ENCODE measurements at regions of chr18 and their contacts with region 1.

Region 1: DNA sequence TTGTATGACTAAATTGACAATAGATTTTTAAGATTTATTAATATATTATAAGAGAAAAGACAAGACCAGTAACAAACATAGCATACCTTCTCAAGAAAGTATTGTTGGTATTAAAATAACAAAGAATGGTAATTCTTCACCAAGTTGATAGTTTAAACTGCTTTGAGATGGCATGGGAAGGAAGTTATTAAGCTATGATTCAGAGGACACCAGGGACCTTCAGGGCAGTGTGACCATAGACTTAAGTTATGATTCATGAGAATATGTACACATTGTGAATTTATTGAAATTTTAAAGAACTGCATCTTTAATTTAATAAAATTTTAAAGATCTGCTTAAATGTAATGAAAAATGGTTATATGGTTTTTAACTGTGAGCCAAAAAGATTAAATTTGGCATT is 205.7 kb downstream of the DSEL start:
- DNase-seq: peak; percentile 46
- H3K4me3 Mint-ChIP-seq: no peak overlapping the region
- H3K27ac Mint-ChIP-seq: no peak overlapping the region
- H3K4me1 Mint-ChIP-seq: no peaks in the 10 kb centered on the region
- H3K27me3 Mint-ChIP-seq: no peaks in the 10 kb centered on the region
- CTCF ChIP-seq: no peak

Region 2: GRCh38 chr18:67243799-67244587 is 66.8 kb before region 1 on chr18:
- CTCF ChIA-PET with region 1: no interaction called
- POLR2A ChIA-PET with region 1: no interaction called
- intact Hi-C with region 1: no loop called
- DNase-seq: peak; percentile 21
- H3K4me3 Mint-ChIP-seq: peak overlapping the region; percentile 62
- H3K27ac Mint-ChIP-seq: peak overlapping the region; percentile 21
- H3K4me1 Mint-ChIP-seq: peaks cover 12% of the 10 kb centered on the region
- H3K27me3 Mint-ChIP-seq: no peaks in the 10 kb centered on the region
- CTCF ChIP-seq: no peak

Region 3: DNA sequence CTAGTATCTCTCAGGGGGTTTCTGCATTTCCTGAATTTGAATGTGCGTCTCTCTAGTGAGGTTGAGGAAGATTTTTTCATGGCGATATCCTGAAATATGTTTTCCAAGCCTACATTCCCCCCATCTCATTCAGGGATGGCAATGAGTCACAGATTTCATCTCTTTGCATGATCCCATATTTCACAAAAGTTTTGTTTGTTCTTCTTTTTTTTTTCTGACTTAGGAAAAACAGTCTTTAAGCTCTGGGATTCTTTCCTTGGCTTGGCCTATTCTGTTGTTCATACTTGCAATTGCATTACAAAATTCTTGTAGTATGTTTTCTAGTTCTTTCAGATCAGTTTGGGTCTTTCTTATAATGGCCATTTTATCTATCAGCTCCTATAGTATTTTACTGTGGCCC is 69.2 kb after region 1 on chr18:
- CTCF ChIA-PET with region 1: no interaction called
- POLR2A ChIA-PET with region 1: no interaction called
- intact Hi-C with region 1: loop called (anchors 10 kb)
- DNase-seq: no peak
- H3K4me3 Mint-ChIP-seq: no peak overlapping the region
- H3K27ac Mint-ChIP-seq: no peak overlapping the region
- H3K4me1 Mint-ChIP-seq: no peaks in the 10 kb centered on the region
- H3K27me3 Mint-ChIP-seq: no peaks in the 10 kb centered on the region
- CTCF ChIP-seq: no peak